ENCODE measurements at regions of chr1 and their contacts with region 1.

Region 1: DNA sequence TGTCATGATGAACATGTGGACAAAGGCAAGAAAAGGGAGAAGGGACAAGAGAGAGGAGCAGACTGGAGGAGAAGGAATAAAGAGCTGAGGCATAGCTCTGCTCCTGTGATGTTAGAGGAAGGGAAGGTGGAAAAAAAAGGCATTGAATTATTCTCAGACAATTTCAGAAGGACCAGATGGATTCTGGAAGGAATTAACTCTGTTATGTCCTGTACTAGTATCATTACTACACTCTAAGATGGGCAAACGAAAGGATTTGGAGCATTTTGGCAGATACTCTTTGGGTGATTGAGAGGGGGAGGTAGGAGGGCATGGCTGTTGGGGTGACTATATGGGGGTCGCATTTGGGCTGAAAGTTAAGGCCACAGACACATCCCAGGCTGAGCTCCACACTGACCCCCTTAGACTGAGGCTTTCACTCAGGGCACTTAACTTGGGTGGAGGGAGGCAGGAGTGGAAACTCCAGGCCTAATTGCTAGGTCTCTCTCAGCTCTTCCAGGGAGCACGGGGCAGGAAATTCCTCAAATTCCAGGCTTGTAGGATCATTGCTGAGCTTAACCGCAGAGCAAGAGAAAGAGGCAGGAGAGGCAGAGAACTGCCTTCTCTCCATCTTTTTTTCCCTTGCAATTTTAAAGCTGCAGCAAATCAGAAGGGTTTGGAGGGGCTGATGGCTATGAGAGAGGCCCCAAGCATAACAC is 25.9 kb downstream of the KIRREL1 start:
- DNase-seq: peak; percentile 73
- ATAC-seq: peak; percentile 95
- H3K4me3 ChIP-seq: peak overlapping the region; percentile 22 to 51
- H3K27ac ChIP-seq: peak overlapping the region; percentile 82
- H3K4me1 ChIP-seq: peaks cover 48 to 69% of the 10 kb centered on the region in 2 experiments
- H3K27me3 ChIP-seq: no peaks in the 10 kb centered on the region
- CTCF ChIP-seq: no peak
- POLR2A ChIP-seq: no peak
- RAD21 ChIP-seq: no peak

Region 2: DNA sequence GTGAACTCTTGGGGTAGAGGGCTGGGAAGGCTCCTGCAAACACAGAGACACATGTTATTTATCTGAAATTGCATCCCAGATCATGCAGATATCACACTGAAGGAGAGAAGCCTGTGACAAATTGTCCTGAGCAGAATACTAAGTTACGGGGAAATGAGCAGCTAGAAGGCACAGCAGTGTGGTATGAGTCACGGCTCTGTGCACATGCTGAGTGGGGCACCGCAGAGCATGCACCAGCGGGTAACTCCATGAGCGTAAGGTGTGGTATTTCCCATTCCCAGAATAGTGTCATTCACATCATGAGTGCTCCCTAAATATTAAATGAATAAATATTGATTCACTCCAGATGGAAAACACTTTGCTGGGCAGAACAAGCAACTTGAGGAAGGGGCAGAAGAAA is 221.1 kb before region 1 on chr1:
- CTCF ChIA-PET with region 1: no interaction called
- POLR2A ChIA-PET with region 1: no interaction called
- RAD21 ChIA-PET with region 1: no interaction called
- intact Hi-C with region 1: no loop called
- DNase-seq: no peak
- ATAC-seq: no peak
- H3K4me3 ChIP-seq: no peak overlapping the region
- H3K27ac ChIP-seq: no peak overlapping the region
- H3K4me1 ChIP-seq: no peaks in the 10 kb centered on the region
- H3K27me3 ChIP-seq: peaks cover 19% of the 10 kb centered on the region; the same call in 1 of the 2 replicates
- CTCF ChIP-seq: no peak
- POLR2A ChIP-seq: no peak
- RAD21 ChIP-seq: no peak

Region 3: DNA sequence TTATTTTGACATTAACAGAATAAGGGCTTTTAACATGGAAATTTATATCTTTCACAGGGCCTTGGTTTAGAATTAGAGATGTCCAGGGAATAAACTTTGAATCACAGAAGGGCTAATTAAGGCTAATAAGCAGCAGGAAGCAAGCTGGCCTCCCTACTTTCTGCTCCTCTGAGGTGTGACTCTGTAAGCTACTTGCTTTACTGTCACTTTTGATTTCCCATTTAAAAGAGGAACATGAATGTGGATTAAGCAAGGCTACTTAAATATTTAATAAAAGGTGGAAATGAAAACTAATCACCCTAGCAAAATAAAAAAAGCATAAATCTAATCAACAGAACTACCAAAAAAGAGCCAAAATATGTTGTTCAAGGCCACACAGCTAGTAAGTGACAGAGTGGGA is 148.8 kb before region 1 on chr1:
- CTCF ChIA-PET with region 1: no interaction called
- POLR2A ChIA-PET with region 1: no interaction called
- RAD21 ChIA-PET with region 1: no interaction called
- intact Hi-C with region 1: no loop called
- DNase-seq: no peak
- ATAC-seq: no peak
- H3K4me3 ChIP-seq: no peak overlapping the region
- H3K27ac ChIP-seq: no peak overlapping the region
- H3K4me1 ChIP-seq: no peaks in the 10 kb centered on the region
- H3K27me3 ChIP-seq: peaks cover 43% of the 10 kb centered on the region
- CTCF ChIP-seq: no peak
- POLR2A ChIP-seq: no peak
- RAD21 ChIP-seq: no peak

Region 4: GRCh38 chr1:157978586-157979403 is 40.5 kb before region 1 on chr1:
- CTCF ChIA-PET with region 1: no interaction called
- POLR2A ChIA-PET with region 1: no interaction called
- RAD21 ChIA-PET with region 1: no interaction called
- intact Hi-C with region 1: no loop called
- DNase-seq: no peak
- ATAC-seq: no peak
- H3K4me3 ChIP-seq: no peak overlapping the region
- H3K27ac ChIP-seq: no peak overlapping the region
- H3K4me1 ChIP-seq: no peaks in the 10 kb centered on the region
- H3K27me3 ChIP-seq: no peaks in the 10 kb centered on the region
- CTCF ChIP-seq: no peak
- POLR2A ChIP-seq: no peak
- RAD21 ChIP-seq: no peak

Region 5: DNA sequence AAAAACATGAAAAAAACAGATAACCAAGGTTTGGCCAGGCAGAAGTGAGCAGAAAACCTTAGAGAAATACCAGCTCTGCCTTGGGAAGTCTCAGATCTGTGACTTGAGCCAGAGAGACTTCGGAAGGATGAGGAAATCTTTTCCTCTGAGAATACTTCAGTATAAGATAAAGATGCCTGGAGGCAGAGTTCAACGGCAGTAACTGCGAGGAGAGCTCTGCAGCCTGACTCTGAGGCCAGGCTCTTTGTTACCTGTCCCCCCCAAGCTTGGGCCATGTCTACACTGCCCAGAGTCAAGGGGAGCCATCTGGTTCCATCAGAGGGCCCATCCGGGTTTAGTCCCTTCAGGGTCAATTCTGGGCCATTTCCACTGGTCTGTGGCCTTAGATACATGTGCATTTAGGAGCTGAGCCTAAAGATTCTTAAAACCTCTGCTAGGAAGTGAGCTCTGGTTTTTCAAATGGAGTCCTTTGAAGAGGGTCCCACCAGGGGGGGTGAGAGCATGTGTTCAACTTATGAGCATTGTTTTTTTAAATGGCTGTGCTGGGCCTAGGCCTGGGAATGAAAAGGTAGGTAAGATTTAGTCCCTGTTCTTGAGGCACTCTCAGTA is 17.2 kb before region 1 on chr1:
- CTCF ChIA-PET with region 1: no interaction called
- POLR2A ChIA-PET with region 1: no interaction called
- RAD21 ChIA-PET with region 1: no interaction called
- intact Hi-C with region 1: no loop called
- DNase-seq: no peak
- ATAC-seq: no peak
- H3K4me3 ChIP-seq: no peak overlapping the region
- H3K27ac ChIP-seq: no peak overlapping the region
- H3K4me1 ChIP-seq: peaks cover 6 to 18% of the 10 kb centered on the region in 2 experiments; a peak in 2 of 4 replicates
- H3K27me3 ChIP-seq: no peaks in the 10 kb centered on the region
- CTCF ChIP-seq: no peak
- POLR2A ChIP-seq: no peak
- RAD21 ChIP-seq: no peak

Region 6: GRCh38 chr1:158035976-158036583 is 16.8 kb after region 1 on chr1:
- CTCF ChIA-PET with region 1: interaction called, 15 read pairs
- POLR2A ChIA-PET with region 1: no interaction called
- RAD21 ChIA-PET with region 1: no interaction called
- intact Hi-C with region 1: no loop called
- DNase-seq: peak; percentile 28
- ATAC-seq: peak; percentile 54
- H3K4me3 ChIP-seq: no peak overlapping the region
- H3K27ac ChIP-seq: no peak overlapping the region
- H3K4me1 ChIP-seq: peaks cover 9 to 23% of the 10 kb centered on the region in 2 experiments
- H3K27me3 ChIP-seq: no peaks in the 10 kb centered on the region
- CTCF ChIP-seq: peak; percentile 69 to 81 (median 77)
- POLR2A ChIP-seq: no peak
- RAD21 ChIP-seq: peak; percentile 82